IMR-90 (cell line): ENCODE measurements at regions of chr19 and their contacts with region 1.

Region 1: DNA sequence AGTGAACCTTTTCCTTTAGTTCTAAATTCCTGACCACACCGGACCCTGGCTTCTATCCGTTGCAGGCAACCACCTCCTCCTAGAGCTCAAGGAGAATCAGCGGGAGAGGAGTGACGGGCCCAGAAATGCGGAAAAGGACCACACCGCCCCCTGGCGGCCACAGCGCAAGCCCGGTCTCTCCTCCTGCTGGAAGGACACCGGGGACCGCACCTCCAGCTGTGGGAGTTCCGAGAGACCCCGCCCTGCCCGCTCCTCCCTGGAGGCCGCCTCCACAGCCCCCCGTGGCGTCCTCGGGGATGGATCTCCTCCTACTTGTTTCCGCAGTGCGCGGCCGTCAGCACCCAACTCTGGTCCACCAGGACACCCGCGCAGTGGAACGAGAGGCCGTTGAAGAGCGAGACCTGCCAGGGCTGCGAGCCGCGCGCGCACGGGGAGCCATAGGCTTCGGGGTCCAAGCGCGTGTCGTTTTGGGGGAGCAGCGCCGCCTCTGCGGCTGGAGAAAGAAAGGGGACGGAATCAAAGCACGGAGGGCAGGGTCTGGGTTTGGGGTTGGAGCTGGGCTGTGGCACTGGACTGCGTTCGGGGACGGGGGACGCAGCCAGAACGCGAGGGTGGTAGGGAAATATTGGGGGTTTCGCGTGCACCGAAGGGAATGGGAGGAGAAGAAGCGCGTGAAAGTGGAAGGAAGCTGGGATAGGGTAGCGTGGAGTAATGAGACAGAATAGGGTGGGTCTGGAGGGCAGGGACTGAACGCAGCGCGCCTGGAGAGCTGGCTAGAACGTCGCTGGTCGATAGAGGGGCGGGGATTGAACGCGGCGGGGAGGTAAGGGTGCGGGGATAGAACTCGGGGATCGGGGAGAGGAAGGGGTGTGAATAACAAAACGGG is 2.5 kb downstream of the KLK10 start:
- DNase-seq: peak; percentile 16
- ATAC-seq: peak; percentile 56
- H3K4me3 ChIP-seq: no peak overlapping the region
- H3K27ac ChIP-seq: no peak overlapping the region
- H3K4me1 ChIP-seq: no peaks in the 10 kb centered on the region
- H3K27me3 ChIP-seq: peaks cover 19% of the 10 kb centered on the region
- CTCF ChIP-seq: peak; percentile 43
- POLR2A ChIP-seq: no peak
- RAD21 ChIP-seq: 0 out of 2 replicates have a peak, but pooled peaks have one; percentile 13

Region 2: DNA sequence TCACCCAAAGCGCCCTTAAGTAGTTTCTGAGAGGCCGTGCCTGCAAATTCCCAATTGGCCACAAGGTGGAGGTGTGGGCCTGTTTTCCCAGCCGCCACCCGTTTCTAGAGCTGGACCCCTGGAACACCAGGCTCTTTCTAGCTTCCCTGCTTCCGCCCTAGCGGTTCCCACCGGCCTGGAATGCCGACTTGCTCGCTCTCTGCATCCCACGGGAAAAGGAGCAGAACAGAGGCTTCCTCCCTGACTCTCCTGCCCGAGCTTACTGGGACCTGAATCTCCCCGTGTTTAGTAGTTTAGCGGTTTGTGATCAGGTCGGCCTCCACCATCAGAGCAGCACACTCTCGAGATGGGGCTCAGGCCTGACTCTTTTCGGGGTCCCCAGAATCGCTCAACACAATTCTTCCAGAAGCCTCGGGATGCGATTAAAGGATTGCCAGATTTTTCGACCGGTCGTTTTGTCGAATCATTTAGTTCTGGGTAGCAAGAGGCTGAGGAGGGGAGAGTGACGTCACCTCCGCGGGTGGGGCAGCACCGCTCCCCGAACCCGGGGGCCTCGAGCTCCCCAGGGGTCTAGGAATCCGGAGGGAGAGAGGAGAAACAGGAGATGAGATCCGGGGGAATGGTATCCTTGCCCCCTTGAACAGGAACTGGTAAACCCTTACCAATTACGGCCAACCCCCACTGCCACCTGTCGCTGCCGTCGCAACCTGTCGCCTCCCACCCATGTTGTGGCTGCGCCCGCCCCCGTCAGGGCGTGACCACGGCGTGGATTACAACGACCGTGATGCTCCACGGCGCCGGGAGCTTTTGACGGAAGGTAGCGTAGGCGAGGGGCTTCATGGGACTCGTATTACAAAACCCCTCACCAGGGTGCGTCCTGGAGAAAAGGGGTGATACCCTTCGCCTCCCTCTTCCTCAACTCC is 659.6 kb before region 1 on chr19:
- CTCF ChIA-PET with region 1: no interaction called
- POLR2A ChIA-PET with region 1: no interaction called
- dilution Hi-C with region 1: no loop called
- in situ Hi-C with region 1: no loop called
- intact Hi-C with region 1: loop called (anchors 10 kb)
- DNase-seq: peak; percentile 41
- ATAC-seq: peak; percentile 96
- H3K4me3 ChIP-seq: peak overlapping the region; percentile 36
- H3K27ac ChIP-seq: no peak overlapping the region
- H3K4me1 ChIP-seq: no peaks in the 10 kb centered on the region
- H3K27me3 ChIP-seq: peaks cover 6% of the 10 kb centered on the region; the same call in 1 of the 2 replicates
- CTCF ChIP-seq: peak; percentile 75
- POLR2A ChIP-seq: no peak
- RAD21 ChIP-seq: peak; percentile 72

Region 3: DNA sequence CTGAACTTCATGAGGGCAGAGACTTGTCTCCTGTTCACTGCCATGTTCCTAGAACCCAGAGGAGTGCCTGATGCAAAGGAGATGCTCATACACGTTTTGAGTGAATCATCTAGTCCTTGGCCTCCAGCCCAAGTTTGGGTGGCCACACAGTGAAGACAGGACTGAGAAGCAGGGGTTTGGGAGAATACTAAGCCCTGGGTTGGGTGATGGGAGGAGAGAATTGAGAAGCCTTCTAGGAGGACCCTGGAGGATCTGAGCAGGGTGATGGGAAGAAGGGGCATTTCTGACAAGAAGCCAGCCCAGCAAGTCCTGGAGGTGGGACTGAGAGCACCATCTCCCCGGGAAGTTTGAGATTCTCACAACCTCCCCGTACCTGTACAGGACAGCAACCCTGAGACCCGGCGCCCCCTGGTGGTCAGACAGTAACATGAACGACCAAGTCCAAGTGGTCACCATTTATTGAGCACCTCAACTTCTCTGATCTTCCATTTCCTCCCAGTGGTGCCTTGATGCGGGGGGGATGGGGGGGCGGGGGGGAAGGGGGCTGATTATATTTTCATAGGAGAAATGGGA is 80.2 kb after region 1 on chr19:
- CTCF ChIA-PET with region 1: interaction called, 3 read pairs
- POLR2A ChIA-PET with region 1: no interaction called
- dilution Hi-C with region 1: no loop called
- in situ Hi-C with region 1: no loop called
- intact Hi-C with region 1: loop called (anchors 1 kb)
- DNase-seq: peak; percentile 62
- ATAC-seq: peak; percentile 54
- H3K4me3 ChIP-seq: no peak overlapping the region
- H3K27ac ChIP-seq: no peak overlapping the region
- H3K4me1 ChIP-seq: peaks cover 3% of the 10 kb centered on the region; the same call in 1 of the 2 replicates
- H3K27me3 ChIP-seq: no peaks in the 10 kb centered on the region
- CTCF ChIP-seq: peak; percentile 55
- POLR2A ChIP-seq: no peak
- RAD21 ChIP-seq: peak; percentile 41

Region 4: GRCh38 chr19:51168564-51169282 is 151.7 kb after region 1 on chr19:
- CTCF ChIA-PET with region 1: interaction called, 3 read pairs
- POLR2A ChIA-PET with region 1: no interaction called
- dilution Hi-C with region 1: no loop called
- in situ Hi-C with region 1: no loop called
- intact Hi-C with region 1: loop called (anchors 1 kb)
- DNase-seq: no peak
- ATAC-seq: no peak
- H3K4me3 ChIP-seq: no peak overlapping the region
- H3K27ac ChIP-seq: no peak overlapping the region
- H3K4me1 ChIP-seq: no peaks in the 10 kb centered on the region
- H3K27me3 ChIP-seq: no peaks in the 10 kb centered on the region
- CTCF ChIP-seq: no peak
- POLR2A ChIP-seq: no peak
- RAD21 ChIP-seq: no peak